HepG2 (cell line): ENCODE measurements at regions of chrX and their contacts with region 1.

Region 1: DNA sequence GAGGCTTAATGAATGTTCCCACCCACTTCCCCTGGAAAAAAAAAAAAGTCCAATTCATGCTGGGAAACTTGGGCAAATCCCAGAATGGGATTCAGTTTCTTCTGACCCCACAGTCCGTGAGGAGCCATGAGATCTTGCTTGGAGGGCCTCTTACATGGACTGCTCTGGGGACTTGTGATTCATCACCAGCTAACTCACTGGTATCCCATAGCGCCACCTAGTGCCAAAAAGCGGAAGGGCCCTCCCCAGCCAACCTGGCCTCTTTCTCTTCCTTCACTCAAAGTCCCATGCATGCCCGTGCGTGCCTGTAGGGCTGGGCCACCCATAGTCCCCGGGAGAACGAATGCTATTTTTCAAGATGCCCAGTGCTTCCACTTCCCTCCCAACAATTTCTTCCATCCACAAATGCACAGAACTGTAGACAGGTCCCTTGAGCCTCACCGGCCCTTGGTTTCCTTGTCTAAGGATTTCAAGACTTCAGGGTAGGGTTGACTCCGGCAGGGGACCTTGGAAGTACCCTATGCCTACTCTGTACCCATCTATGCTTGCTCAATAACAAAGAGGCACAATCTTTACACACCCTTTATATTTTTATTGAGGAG is 5.1 kb downstream of the RTL5 start:
- DNase-seq: peak; percentile 30
- ATAC-seq: peak; percentile 91
- H3K4me3 ChIP-seq: no peak overlapping the region
- H3K27ac ChIP-seq: no peak overlapping the region
- H3K4me1 ChIP-seq: no peaks in the 10 kb centered on the region
- H3K27me3 ChIP-seq: no peaks in the 10 kb centered on the region; a peak in 1 of 5 replicates
- CTCF ChIP-seq: peak; percentile 79
- EP300 ChIP-seq: no peak
- POLR2A ChIP-seq: no peak
- RAD21 ChIP-seq: no peak

Region 2: DNA sequence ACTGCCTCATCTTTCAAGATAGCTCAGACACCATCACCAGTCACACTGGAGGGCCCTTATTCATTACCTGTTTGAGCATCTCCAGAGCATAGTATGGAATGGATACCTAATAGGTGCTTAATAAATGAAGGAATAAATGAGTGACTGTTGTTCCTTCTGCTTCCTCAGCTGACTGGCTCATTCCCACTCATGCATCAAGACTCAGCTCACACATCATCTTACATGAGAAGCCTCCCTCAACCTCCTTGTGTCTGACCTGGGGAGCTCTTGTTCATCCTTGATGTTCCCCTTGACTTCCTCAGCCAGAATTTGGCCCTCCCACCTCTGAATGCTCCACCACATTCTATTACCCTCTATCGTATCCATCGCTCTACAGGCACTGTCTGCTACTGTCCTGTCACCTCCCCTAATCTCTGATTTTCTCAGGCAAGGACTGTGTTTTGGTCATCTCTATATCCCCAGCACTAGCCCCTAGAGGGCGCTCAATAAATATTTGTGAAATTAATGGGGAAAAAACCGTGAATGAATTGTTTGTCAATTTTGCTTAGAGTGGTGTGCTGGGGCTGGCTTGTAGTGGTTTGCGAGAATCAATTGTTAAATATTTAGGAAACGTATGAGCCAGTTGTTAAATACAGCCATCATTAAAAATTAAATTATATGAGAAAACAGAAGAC is 127.7 kb before region 1 on chrX:
- CTCF ChIA-PET with region 1: interaction called, 3 read pairs
- POLR2A ChIA-PET with region 1: no interaction called
- in situ Hi-C with region 1: loop called (anchors 10 kb)
- intact Hi-C with region 1: loop called (anchors 1 kb)
- DNase-seq: peak; percentile 12
- ATAC-seq: peak; percentile 66
- H3K4me3 ChIP-seq: no peak overlapping the region
- H3K27ac ChIP-seq: no peak overlapping the region
- H3K4me1 ChIP-seq: no peaks in the 10 kb centered on the region
- H3K27me3 ChIP-seq: peaks cover 0 to 1% of the 10 kb centered on the region in 2 experiments; a peak in 1 of 5 replicates
- CTCF ChIP-seq: peak; percentile 43
- EP300 ChIP-seq: no peak
- POLR2A ChIP-seq: no peak
- RAD21 ChIP-seq: no peak

Region 3: DNA sequence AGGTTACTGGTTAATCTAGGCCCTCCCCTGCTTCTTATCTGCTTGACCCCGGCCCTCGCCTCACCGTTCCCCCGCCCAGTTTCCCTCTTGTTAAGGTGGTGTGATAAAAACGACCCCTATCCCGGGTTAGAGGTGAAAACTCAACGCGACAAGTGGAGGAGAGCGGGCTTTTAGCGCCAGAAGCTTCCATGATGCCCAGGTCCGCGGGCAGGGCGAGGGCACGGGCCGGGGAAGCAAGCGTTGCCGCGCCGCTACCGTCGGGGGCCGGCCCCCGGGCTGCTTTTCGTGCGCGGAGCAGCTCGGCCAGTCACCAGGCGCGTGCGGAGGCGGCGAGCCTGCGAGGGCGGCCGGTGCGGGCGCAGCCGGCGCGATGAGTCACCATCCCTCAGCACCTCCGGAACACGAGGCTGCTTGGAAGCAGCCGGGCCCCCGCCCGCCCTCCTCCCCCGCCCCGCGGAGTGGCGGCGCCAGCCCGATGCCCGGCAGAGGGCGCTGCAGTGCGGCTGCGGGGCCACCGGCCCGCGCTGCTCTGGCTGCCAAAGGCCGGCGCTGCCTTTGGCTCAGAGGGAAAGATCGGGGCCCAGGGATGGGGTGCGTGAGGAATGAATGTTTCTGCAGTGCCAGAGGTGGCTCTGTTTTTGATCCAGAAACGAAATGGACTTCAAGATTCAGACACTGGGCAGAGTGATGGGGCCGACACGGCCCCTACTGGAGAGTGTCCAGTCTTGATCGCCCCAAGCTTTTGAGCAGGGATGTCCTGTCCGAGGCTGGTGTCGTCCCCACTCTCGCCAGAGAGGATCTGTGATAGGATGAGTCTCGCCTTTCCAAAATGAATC is 108.1 kb before region 1 on chrX:
- CTCF ChIA-PET with region 1: interaction called, 6 read pairs
- POLR2A ChIA-PET with region 1: no interaction called
- in situ Hi-C with region 1: no loop called
- intact Hi-C with region 1: loop called (anchors 5 kb)
- DNase-seq: peak; percentile 47
- ATAC-seq: peak; percentile 99
- H3K4me3 ChIP-seq: no peak overlapping the region
- H3K27ac ChIP-seq: no peak overlapping the region
- H3K4me1 ChIP-seq: peaks cover 5% of the 10 kb centered on the region
- H3K27me3 ChIP-seq: peaks cover 0 to 5% of the 10 kb centered on the region in 2 experiments; a peak in 1 of 5 replicates
- CTCF ChIP-seq: peak; percentile 68
- EP300 ChIP-seq: no peak
- POLR2A ChIP-seq: no peak
- RAD21 ChIP-seq: peak; percentile 48